Activated T-helper 2 cell treated with anti-CD3 and anti-CD28 coated beads, Interferon-gamma antibody, Interleukin-2, Interleukin-4, amounts not matched to agents 10 μg/mL and 5 μg/mL and 100 μg/mL, durations not matched to agents 14 hours and 24 hours and 36 hours (primary cell): ENCODE measurements at regions of chr2 and their contacts with region 1.

Region 1: DNA sequence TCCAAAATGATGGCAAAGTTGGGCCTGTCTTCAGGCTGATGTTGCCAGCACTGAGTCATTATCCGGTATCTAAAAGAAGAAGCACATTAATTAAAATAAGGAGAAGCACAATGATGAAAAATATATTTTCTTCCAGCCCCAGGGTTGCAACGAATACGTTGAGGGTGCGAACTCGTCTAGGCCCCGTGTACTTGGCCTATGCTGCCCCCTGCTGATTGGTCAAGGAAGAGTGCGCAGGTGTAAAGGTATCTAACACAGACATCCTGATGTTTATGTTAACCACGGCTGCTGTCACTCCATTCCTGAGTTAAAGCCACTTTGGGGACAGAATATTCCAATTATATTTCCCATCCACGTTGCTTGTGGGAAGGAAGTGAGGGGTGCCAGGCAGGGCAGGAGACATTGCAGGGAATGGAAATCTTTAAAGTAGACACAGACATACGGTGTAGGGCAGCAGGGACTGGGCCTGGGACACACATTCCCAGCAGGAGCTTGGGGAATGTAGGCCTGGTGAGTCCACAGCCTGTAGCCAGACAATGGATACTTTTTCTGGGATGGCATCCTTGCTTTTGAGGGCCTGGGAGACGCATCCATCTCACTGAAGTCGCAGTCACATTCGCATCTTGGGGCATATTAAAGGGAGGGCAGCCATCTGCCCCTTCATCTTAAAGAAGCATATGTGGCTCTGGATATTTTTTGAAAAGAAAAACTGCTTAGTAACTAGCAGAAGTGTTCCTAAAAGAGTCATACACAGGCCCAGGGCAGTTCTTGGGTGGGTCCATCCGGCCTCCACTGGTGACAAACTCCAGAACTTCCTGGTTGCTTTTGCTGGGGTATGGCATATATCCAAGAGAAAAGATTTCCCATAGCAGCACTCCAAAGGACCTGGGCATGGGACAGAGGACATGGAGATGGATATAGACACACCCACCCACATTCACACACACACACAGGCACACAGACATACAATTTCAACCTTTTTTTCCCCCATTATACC is 81.9 kb downstream of the CLIP4 start:
- DNase-seq: peak; percentile 62
- H3K4me3 Mint-ChIP-seq: no peak overlapping the region
- H3K27ac Mint-ChIP-seq: no peak overlapping the region
- H3K4me1 Mint-ChIP-seq: no peaks in the 10 kb centered on the region
- H3K27me3 Mint-ChIP-seq: no peaks in the 10 kb centered on the region

Region 2: DNA sequence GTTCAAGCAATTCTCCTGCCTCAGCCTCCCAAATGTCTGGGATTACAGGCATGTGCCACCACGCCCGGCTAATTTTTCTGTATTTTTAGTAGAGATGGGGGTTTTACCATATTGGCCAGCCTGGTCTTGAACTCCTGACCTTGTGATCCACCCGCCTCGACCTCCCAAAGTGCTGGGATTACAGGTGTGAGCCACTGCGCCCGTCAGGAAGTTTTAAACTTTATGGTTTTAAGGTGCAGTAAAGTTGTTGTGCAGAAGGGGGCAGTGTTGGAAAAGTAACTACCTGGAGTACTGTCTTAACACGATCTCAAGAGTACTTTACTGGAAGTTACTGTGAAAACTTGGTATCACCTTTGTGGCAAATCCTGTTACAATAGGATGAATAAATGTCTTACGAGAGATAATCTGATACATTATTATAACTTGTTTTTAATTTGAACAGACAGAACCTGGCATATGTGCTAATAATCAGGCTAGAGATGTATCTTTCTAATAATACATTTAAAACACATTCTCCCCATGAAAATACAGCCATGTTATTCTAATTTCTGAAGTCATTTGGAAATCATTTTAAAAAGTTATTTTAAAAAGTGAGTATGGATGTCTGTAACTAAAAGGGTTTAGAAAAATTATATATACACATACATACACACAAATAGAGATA is 375.7 kb before region 1 on chr2:
- intact Hi-C with region 1: loop called (anchors 5 kb)
- DNase-seq: peak; percentile 33
- H3K4me3 Mint-ChIP-seq: no peak overlapping the region
- H3K27ac Mint-ChIP-seq: no peak overlapping the region
- H3K4me1 Mint-ChIP-seq: peaks cover 6% of the 10 kb centered on the region
- H3K27me3 Mint-ChIP-seq: peaks cover 2% of the 10 kb centered on the region

Region 3: DNA sequence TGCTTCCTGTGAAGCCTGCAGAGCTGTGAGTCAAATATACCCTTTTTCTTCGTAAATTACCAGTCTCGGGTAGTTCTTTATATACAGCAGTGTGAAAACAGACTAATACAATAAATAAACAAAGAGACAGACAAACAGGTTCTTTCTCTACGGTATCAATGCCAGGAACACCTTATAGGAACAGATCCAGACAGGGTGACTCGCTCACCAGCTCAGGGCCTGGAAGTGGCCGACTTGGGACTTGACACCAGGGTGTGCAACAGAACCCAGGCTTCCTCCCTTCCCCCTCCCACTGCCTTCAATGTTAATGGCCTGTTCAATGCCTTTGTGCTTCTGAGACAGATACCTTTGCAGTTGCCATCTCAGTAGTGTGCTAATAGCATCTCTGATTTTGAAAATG is 414.8 kb after region 1 on chr2:
- intact Hi-C with region 1: no loop called
- DNase-seq: no peak
- H3K4me3 Mint-ChIP-seq: no peak overlapping the region
- H3K27ac Mint-ChIP-seq: no peak overlapping the region
- H3K4me1 Mint-ChIP-seq: peaks cover 12% of the 10 kb centered on the region
- H3K27me3 Mint-ChIP-seq: peaks cover 18% of the 10 kb centered on the region